ENCODE measurements at regions of chrX and their contacts with region 1.

Region 1: DNA sequence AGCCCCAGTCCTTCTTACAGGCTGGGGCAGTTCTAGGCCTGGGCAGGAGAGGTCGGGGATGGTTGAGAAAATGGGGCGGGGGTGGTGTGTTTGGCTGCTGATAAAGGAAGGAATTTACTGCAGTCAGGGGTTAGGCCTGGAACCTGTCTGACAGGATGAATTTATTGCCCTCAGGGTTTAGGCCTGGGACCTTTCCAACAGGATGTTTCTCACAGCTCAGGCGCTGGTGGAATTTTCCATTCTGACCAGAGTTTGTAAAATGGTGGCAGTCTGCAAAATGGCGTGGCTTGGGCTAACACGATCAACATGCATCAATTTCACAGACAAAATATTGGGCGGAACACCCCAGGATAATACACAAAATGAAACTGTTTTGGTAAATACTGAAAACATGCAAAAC is 83.5 kb upstream of the SPIN4 start:
- DNase-seq: peak; percentile 80 to 86
- H3K4me3 ChIP-seq: peak overlapping the region; percentile 45; the same call in 1 of the 2 replicates
- H3K27ac ChIP-seq: peak overlapping the region; percentile 99
- H3K4me1 ChIP-seq: peaks cover 32% of the 10 kb centered on the region
- H3K27me3 ChIP-seq: no peaks in the 10 kb centered on the region
- CTCF ChIP-seq: no peak

Region 2: DNA sequence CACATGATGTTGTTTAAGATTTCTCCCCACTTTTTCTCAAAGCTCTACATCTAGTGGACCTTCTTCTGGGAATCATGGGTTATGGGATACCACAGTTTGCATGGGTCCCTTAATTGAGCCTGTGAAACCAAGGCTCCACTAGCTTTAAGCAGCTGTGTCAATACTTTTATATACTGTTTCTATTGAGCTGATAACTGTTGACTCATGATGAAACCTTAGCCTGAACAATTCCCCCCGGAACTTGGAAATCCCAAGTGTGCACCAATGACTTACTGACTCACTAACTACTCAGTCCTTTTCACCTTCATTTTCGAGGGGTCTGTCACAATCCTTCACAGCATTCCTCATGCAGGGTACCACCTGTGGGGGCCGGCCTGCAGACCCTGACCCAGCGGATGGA is 70.9 kb before region 1 on chrX:
- CTCF ChIA-PET with region 1: no interaction called
- POLR2A ChIA-PET with region 1: no interaction called
- intact Hi-C with region 1: loop called (anchors 5 kb)
- DNase-seq: no peak
- H3K4me3 ChIP-seq: no peak overlapping the region
- H3K27ac ChIP-seq: no peak overlapping the region
- H3K4me1 ChIP-seq: no peaks in the 10 kb centered on the region
- H3K27me3 ChIP-seq: no peaks in the 10 kb centered on the region
- CTCF ChIP-seq: no peak

Region 3: DNA sequence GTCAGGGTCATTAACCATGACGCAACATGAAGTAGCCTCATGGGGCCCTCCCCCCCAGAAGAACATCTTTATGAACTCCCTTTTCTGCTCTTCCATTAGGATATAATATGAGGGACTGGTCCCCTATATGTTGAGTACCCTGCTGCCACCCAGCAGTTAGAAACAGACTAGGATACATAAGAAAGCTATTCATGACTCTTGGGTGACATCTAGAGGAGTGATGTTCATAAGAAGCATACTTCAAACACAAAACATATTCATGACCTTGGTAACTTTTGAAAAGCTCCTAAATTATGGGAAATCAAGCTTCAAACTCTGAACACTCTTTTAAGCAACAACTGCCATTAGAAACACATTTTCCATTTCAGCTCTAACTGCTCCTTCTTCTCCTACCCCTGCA is 71.7 kb after region 1 on chrX:
- CTCF ChIA-PET with region 1: no interaction called
- POLR2A ChIA-PET with region 1: no interaction called
- intact Hi-C with region 1: loop called (anchors 1 kb)
- DNase-seq: no peak
- H3K4me3 ChIP-seq: no peak overlapping the region
- H3K27ac ChIP-seq: no peak overlapping the region
- H3K4me1 ChIP-seq: peaks cover 10% of the 10 kb centered on the region
- H3K27me3 ChIP-seq: no peaks in the 10 kb centered on the region
- CTCF ChIP-seq: peak; percentile 58

Region 4: GRCh38 chrX:63560601-63561218 is 126.0 kb after region 1 on chrX:
- CTCF ChIA-PET with region 1: no interaction called
- POLR2A ChIA-PET with region 1: no interaction called
- intact Hi-C with region 1: loop called (anchors 5 kb)
- DNase-seq: peak; percentile 50 to 71
- H3K4me3 ChIP-seq: peak overlapping the region; percentile 83
- H3K27ac ChIP-seq: peak overlapping the region; percentile 63
- H3K4me1 ChIP-seq: peaks cover 11% of the 10 kb centered on the region; the same call in 1 of the 2 replicates
- H3K27me3 ChIP-seq: no peaks in the 10 kb centered on the region
- CTCF ChIP-seq: no peak

Region 5: DNA sequence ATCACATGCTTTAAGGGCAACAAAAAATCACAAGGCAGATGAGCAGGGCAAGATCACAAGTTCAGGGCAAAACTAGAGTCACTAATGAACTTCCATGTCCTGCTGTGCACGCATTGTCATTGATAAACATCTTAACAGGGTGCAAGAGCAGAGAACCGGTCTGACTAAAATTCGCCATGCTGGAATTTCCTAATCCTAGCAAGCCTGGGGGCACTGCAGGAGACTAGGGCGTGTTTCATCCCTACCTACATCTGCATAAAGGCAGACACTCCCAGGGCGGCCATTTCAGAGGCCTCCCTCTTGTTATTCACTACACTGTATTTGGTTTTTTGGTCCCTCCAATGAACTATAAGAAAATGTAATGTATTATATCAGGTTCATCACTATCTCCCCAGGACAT is 146.7 kb after region 1 on chrX:
- CTCF ChIA-PET with region 1: no interaction called
- POLR2A ChIA-PET with region 1: no interaction called
- intact Hi-C with region 1: no loop called
- DNase-seq: no peak
- H3K4me3 ChIP-seq: no peak overlapping the region
- H3K27ac ChIP-seq: no peak overlapping the region
- H3K4me1 ChIP-seq: no peaks in the 10 kb centered on the region
- H3K27me3 ChIP-seq: no peaks in the 10 kb centered on the region
- CTCF ChIP-seq: no peak

Measured in PC-9 (cell line).